ENCODE measurements at regions of chr11 and their contacts with region 1.

Region 1: GRCh38 chr11:88535916-88536547 is 198.5 kb upstream of the CTSC start:
- DNase-seq: no peak
- H3K4me3 Mint-ChIP-seq: no peak overlapping the region
- H3K27ac Mint-ChIP-seq: peak overlapping the region; percentile 47
- H3K4me1 Mint-ChIP-seq: peaks cover 37% of the 10 kb centered on the region
- H3K27me3 Mint-ChIP-seq: peaks cover 9% of the 10 kb centered on the region

Region 2: GRCh38 chr11:88174709-88175568 is 361.1 kb before region 1 on chr11 and contains the start of gene RAB38:
- intact Hi-C with region 1: loop called (anchors 1 kb)
- DNase-seq: peak; percentile 32
- H3K4me3 Mint-ChIP-seq: peak within 1 kb of the TSS; percentile 83
- H3K27ac Mint-ChIP-seq: peak within 1 kb of the TSS; percentile 73
- H3K4me1 Mint-ChIP-seq: peaks cover 52% of the 10 kb centered on the region
- H3K27me3 Mint-ChIP-seq: no peaks in the 10 kb centered on the region
- total RNA-seq, gene RAB38: 2.0 and 2.8 TPM in 2 replicates

Region 3: GRCh38 chr11:88301488-88302140 is 234.4 kb before region 1 on chr11:
- intact Hi-C with region 1: loop called (anchors 2 kb)
- DNase-seq: no peak
- H3K4me3 Mint-ChIP-seq: peak overlapping the region; percentile 1
- H3K27ac Mint-ChIP-seq: peak overlapping the region; percentile 95
- H3K4me1 Mint-ChIP-seq: peaks cover 50% of the 10 kb centered on the region
- H3K27me3 Mint-ChIP-seq: no peaks in the 10 kb centered on the region

Region 4: GRCh38 chr11:88421530-88421929 is 114.5 kb before region 1 on chr11:
- intact Hi-C with region 1: loop called (anchors 2 kb)
- DNase-seq: peak; percentile 43
- H3K4me3 Mint-ChIP-seq: peak overlapping the region; percentile 67
- H3K27ac Mint-ChIP-seq: peak overlapping the region; percentile 90
- H3K4me1 Mint-ChIP-seq: peaks cover 69% of the 10 kb centered on the region
- H3K27me3 Mint-ChIP-seq: no peaks in the 10 kb centered on the region

Region 5: GRCh38 chr11:88484873-88485621 is 51.0 kb before region 1 on chr11:
- intact Hi-C with region 1: no loop called
- DNase-seq: no peak
- H3K4me3 Mint-ChIP-seq: no peak overlapping the region
- H3K27ac Mint-ChIP-seq: no peak overlapping the region
- H3K4me1 Mint-ChIP-seq: peaks cover 13% of the 10 kb centered on the region
- H3K27me3 Mint-ChIP-seq: no peaks in the 10 kb centered on the region

Region 6: DNA sequence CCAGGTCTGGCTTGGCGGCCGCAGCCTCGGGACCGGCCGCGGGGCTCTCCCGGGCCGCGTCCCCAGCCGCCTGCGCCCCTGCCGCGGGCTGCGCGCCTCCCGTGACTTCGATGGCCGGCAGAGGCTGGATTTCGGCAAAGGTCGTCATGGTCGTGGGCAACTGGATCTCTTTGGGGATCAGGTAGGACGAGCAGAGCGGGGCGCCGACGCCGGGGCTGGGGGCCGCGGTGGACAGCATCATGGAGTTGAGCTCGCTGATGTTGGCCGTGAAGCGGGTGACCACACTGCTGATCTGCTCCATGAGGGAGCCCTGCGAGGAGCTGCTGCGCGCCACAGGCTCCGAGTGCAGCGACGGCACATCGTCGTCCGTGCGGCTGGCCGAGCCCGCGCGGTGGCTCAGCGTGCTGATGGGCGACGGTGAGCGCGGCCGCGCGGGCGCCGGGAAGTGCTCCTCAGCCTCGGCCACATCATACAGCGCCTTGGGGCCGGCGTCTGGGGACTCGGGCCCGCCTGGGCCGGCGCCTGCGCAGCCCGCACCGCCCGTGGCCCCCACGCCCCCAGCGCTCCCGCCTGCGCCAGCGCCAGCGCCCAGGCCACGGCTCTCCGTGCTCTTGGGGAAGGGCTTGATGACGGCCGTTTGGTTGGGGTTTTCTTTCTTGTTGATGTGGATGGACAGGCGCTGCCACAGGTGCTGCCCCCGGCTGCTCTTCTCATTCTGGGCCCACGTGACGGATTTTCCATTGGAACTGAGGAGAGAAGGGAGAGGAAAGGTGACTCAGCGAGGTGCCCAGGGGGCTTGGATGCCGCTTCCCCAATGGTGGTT is 27.1 kb before region 1 on chr11:
- intact Hi-C with region 1: loop called (anchors 2 kb)
- DNase-seq: no peak
- H3K4me3 Mint-ChIP-seq: peak overlapping the region; percentile 79
- H3K27ac Mint-ChIP-seq: peak overlapping the region; percentile 36
- H3K4me1 Mint-ChIP-seq: peaks cover 16% of the 10 kb centered on the region
- H3K27me3 Mint-ChIP-seq: peaks cover 71% of the 10 kb centered on the region

Region 7: GRCh38 chr11:88689548-88690240 is 153.7 kb after region 1 on chr11:
- intact Hi-C with region 1: no loop called
- DNase-seq: no peak
- H3K4me3 Mint-ChIP-seq: no peak overlapping the region
- H3K27ac Mint-ChIP-seq: no peak overlapping the region
- H3K4me1 Mint-ChIP-seq: no peaks in the 10 kb centered on the region
- H3K27me3 Mint-ChIP-seq: no peaks in the 10 kb centered on the region

Measured in activated T-helper 1 cell treated with anti-CD3 and anti-CD28 coated beads, Interleukin-12 subunit alpha, Interleukin-12 subunit beta, Interleukin-2, Interleukin-4 antibody, amounts not matched to agents 30 ng/mL and 10 ng/mL and 1 ng/mL, durations not matched to agents 14 hours and 24 hours and 36 hours (primary cell).